Left ventricle myocardium superior (tissue), 1 donor: ENCODE measurements at regions of chr18 and their contacts with region 1.

Region 1: DNA sequence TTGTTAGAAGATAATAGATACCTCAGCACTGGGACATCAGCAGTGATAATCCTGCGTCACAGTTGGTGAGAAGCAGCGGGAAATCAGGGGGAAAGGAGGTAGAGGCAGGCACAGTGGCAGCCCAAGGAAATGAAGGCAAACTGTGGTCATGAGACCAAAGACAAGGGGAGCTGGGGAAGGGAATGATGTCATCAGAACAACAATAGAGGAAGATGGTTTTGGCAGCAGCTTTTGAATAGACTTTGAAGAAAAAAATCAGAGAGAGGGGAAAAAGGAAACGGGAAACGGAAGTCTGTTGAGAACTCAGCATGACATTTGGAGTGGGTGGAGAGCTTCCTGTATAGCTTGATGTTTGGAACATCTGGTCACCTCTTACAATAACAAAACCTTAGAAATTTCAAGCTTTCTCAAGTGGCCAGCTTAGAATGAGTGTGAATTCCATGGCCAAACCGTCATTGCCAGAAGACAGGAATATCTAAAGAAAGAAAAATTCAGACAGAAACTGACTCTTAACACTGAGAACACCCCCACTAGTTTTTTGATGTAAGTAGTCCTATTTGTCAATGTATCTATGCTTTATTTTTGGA is 18.4 kb upstream of the YES1 start:
- DNase-seq: no peak
- ATAC-seq: peak; percentile 78

Region 2: GRCh38 chr18:623761-624620 is 206.4 kb before region 1 on chr18:
- intact Hi-C with region 1: loop called (anchors 5 kb)
- DNase-seq: peak; percentile 62
- ATAC-seq: peak; percentile 66

Region 3: GRCh38 chr18:634551-635045 is 195.8 kb before region 1 on chr18:
- intact Hi-C with region 1: no loop called
- DNase-seq: no peak
- ATAC-seq: no peak

Region 4: DNA sequence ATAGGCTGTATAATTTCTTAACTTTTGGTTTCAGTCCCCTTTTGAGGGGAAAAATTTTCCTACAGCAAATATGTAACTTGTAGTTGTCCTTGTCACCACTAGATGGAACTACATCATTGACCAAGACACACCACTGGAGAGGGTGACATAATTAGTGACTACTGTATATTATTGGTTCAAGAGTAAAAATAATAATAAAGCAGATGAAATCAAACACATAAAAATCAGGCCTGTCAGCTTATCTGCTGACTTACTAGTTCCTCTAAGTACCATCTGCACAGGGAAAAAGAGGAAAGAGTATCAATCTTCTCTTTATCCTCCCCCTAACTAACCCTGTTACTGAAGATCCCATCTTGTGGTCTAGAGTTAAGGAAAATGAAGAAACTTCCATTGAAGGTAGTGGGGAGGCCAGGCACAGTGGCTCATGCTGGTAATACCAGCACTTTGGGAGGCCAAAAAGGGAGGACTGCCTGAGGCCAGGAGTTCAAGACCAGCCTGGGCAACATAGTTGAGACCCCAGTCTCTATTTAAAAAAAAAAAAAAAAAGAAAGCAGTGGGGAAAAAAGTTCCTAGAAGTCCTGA is 88.4 kb before region 1 on chr18:
- intact Hi-C with region 1: loop called (anchors 2 kb)
- DNase-seq: no peak
- ATAC-seq: peak; percentile 71